ENCODE measurements at regions of chr10 and their contacts with region 1.

Region 1: DNA sequence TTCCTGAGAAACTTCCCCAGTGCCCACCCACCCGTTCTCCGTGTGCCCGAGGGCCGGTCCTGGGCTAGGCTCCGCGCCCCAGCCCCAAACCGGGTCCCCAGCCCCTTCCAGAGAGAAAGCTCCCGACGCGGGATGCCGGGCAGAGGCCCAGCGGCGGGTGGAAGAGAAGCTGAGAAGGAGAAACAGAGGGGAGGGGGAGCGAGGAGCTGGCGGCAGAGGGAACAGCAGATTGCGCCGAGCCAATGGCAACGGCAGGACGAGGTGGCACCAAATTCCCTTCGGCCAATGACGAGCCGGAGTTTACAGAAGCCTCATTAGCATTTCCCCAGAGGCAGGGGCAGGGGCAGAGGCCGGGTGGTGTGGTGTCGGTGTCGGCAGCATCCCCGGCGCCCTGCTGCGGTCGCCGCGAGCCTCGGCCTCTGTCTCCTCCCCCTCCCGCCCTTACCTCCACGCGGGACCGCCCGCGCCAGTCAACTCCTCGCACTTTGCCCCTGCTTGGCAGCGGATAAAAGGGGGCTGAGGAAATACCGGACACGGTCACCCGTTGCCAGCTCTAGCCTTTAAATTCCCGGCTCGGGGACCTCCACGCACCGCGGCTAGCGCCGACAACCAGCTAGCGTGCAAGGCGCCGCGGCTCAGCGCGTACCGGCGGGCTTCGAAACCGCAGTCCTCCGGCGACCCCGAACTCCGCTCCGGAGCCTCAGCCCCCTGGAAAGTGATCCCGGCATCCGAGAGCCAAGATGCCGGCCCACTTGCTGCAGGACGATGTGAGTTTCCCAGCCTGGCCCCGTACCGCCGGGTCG is at the start of gene SCD:
- DNase-seq: peak; percentile 69
- ATAC-seq: peak; percentile 95
- H3K4me3 Mint-ChIP-seq: peak within 1 kb of the TSS; percentile 89
- H3K27ac Mint-ChIP-seq: peak within 1 kb of the TSS; percentile 61
- H3K4me1 Mint-ChIP-seq: peaks cover 22% of the 10 kb centered on the region
- H3K27me3 Mint-ChIP-seq: peaks cover 3% of the 10 kb centered on the region
- CTCF ChIP-seq: no peak
- total RNA-seq, gene SCD: 24.9 and 26.0 TPM in 2 replicates

Region 2: DNA sequence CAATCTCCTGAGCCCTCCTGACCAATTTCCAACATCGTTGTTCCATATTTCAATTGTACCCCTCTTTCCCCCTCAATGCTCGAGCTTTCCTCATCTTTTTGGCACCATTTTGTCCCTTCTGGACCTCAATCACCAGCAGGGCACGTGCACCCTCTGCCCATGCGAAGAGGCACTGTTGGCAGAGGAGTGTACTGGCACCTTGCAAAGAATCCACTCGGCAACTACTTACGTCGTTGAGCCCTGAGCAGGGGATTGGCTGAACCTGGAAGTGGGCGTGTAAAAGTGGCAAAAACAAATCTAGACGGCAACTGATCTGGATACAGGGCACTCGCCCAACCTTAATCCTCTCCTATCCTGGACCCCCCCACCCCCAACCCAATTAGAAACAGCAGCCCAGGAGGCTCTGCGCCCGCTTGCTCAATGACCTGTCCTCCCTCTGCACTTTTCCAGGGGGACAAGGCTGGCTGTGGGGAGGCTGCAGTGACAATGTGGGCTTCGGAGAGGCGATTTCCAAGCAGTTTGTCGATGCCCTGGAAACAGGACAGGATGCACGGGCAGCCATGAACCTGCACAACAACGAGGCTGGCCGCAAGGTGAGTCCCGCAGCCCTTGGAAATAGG is 134.6 kb after region 1 on chr10:
- CTCF ChIA-PET with region 1: no interaction called
- POLR2A ChIA-PET with region 1: interaction called, 3 read pairs
- intact Hi-C with region 1: loop called (anchors 2 kb)
- DNase-seq: peak; percentile 89
- ATAC-seq: peak; percentile 99
- H3K4me3 Mint-ChIP-seq: peak overlapping the region; percentile 87
- H3K27ac Mint-ChIP-seq: no peak overlapping the region
- H3K4me1 Mint-ChIP-seq: peaks cover 9% of the 10 kb centered on the region
- H3K27me3 Mint-ChIP-seq: peaks cover 30% of the 10 kb centered on the region
- CTCF ChIP-seq: no peak